ENCODE measurements at regions of chr6 and their contacts with region 1.

Region 1: DNA sequence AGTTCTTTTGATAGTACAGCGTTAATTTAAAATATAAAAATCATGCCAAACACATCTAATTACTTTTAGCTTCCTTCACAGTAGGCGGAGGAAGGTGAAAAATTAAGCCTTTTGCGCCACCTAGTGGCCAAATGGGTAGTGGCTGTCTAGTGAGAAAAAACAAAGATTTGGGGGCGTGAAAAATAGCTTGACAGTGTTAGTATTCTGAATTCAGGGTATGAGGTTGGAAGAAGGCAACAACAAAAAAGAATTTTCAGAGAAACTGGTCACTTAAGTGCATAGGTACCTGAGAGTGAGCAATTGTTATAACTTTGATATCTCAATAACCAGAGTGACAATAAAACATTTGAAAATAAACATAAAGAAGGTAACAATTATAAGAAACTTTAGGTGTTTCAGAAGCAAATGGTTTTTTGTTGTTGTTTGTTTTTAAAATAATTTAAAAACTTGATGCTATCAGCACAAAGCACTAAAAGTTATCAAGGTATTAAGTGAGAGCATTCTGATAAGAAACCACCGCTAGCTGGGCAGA is 14.3 kb downstream of the PSMB9 start:
- DNase-seq: no peak
- H3K4me3 ChIP-seq: no peak overlapping the region
- H3K27me3 ChIP-seq: peaks cover 6% of the 10 kb centered on the region
- CTCF ChIP-seq: peak; percentile 87

Region 2: DNA sequence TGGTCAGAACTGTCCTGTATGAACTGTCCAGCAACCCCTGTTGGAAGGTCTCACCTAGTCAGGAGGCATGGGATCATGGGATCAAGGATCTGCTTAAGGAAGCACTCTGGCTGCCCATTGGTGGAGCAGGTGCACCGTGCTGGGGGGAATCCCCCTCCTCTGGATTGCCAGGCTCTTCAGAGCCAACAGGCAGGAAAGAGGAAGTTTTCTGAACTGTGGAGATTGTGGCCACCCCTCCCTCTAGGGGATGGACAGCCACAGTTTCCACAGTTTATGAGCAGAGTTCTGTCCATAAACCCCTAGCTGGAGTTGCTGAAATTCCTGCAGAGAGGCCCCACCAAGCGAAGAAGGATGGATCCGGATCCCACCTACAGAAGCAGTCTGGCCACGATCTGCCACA is 188.8 kb before region 1 on chr6:
- CTCF ChIA-PET with region 1: no interaction called
- POLR2A ChIA-PET with region 1: no interaction called
- DNase-seq: no peak
- H3K4me3 ChIP-seq: no peak overlapping the region
- H3K27me3 ChIP-seq: no peaks in the 10 kb centered on the region
- CTCF ChIP-seq: no peak

Region 3: DNA sequence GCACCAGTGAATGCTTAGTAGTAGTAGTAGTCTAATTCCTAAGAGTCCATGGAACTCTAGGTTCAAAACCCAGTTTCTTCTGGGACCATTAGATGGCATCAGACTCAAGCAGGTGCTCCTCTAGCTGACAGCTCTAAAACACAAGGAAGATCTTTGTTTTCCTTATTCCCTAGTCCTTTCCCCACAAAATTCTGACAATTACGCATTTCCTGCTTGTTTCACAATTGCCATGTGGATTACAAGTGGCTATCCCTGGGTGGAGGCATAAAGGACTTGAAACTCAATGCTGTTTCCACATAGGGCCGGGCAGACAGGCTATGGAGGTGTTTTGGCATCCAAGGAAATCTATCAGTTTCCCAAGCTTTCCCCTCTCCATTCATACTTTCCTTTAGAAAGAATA is 42.4 kb before region 1 on chr6:
- CTCF ChIA-PET with region 1: interaction called, 24 read pairs
- POLR2A ChIA-PET with region 1: no interaction called
- DNase-seq: peak; percentile 35
- H3K4me3 ChIP-seq: no peak overlapping the region
- H3K27me3 ChIP-seq: no peaks in the 10 kb centered on the region
- CTCF ChIP-seq: peak; percentile 48

Region 4: DNA sequence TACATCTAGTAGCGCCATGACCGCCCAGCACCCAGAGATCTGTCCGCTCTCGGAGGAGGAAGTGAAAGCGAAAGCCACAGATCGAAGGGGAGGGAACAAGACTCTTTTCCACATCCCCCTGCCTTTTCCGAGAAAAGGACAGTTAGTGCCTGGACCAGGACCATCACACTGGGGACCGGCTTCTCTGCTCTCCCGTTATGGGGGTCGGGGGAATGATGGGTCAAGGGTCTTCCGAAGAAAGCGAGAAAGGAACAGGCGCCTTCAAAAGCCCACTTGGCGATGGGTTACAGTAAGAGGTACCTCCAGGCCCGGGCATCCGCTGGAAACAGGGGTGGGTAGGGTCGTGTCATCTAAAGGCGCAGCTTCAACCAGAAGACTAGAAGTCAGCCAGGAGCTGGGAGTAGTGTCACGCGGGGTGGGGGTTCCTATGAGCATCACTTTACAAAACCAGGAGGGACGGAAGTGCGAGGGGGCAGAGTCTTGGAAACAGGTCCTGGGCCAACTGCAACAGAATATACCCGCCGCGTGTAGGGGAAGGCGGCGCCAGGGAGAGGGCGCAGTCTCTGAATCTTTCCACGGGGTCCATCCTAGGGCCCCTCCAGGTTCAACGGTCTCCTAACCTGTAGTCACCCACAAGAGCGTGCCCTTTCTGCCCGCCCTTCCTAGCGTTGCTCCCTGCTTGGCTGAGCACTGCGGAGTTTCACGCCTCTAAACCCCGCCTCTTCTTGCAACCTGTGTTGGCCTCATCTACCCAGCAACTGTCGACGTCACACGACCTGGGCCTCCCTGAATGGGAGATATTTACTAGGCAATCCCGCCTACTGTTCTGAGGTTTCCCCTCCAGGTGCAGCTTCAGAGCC is 24.1 kb before region 1 on chr6 and contains the start of gene PSMB8:
- CTCF ChIA-PET with region 1: interaction called, 110 read pairs
- POLR2A ChIA-PET with region 1: no interaction called
- DNase-seq: peak; percentile 72
- H3K4me3 ChIP-seq: peak within 1 kb of the TSS; percentile 61
- H3K27me3 ChIP-seq: no peaks in the 10 kb centered on the region
- CTCF ChIP-seq: peak; percentile 41
- polyA plus RNA-seq, gene PSMB8: 56.7 and 79.6 TPM in 2 replicates

Region 5: GRCh38 chr6:32853541-32854375 is 14.6 kb before region 1 on chr6 and contains the starts of genes PSMB9 and TAP1:
- CTCF ChIA-PET with region 1: interaction called, 57 read pairs
- POLR2A ChIA-PET with region 1: no interaction called
- DNase-seq: peak; percentile 61
- H3K4me3 ChIP-seq: peak within 1 kb of the TSS; percentile 65
- H3K27me3 ChIP-seq: no peaks in the 10 kb centered on the region
- CTCF ChIP-seq: peak; percentile 72
- polyA plus RNA-seq, gene PSMB9: 37.9 and 44.7 TPM in 2 replicates
- polyA plus RNA-seq, gene TAP1: 58.4 and 80.4 TPM in 2 replicates

Region 6: GRCh38 chr6:32885698-32886286 is 17.5 kb after region 1 on chr6:
- CTCF ChIA-PET with region 1: interaction called, 10 read pairs
- POLR2A ChIA-PET with region 1: no interaction called
- DNase-seq: peak; percentile 16
- H3K4me3 ChIP-seq: no peak overlapping the region
- H3K27me3 ChIP-seq: no peaks in the 10 kb centered on the region
- CTCF ChIP-seq: peak; percentile 45

Region 7: GRCh38 chr6:32940656-32941213 is 72.4 kb after region 1 on chr6 and contains the start of gene HLA-DMB:
- CTCF ChIA-PET with region 1: interaction called, 10 read pairs
- POLR2A ChIA-PET with region 1: no interaction called
- DNase-seq: no peak
- H3K4me3 ChIP-seq: no peak within 1 kb of the TSS
- H3K27me3 ChIP-seq: peaks cover 23% of the 10 kb centered on the region
- CTCF ChIP-seq: no peak
- polyA plus RNA-seq, gene HLA-DMB: not detected in 2 replicates